ENCODE measurements at regions of chrX and their contacts with region 1.

Region 1: DNA sequence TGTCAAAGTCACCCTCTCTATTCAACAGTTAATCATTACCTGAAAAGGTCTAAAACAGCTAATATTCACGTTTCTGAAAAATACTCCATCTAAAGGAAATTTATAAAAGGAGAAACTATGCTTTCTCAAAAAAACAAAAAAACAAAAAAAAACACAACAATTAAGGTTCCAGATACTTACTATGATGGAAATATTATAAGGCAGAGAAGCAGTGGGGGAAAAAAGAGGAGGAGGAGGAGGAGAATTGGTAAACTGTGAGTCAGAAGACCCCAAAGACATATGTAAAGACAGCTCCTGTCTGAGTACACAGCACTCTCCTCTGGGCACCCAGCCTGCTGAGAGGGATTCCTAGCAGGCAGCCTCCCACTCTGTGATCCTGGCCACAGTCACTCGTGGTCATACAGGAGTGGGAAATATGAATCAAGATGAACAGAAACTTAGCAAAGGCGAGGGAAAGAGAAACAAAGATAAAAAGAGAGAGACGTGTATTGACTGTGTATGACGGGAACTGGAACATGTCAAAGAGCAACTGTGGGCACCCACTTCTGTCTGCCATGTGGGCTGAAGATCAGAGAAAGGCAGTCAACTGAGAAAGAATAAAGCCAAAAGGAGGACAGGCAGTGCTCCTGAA is 12.5 kb downstream of the KLHL15 start:
- DNase-seq: no peak
- H3K4me3 ChIP-seq: no peak overlapping the region
- H3K27ac ChIP-seq: no peak overlapping the region
- H3K4me1 ChIP-seq: no peaks in the 10 kb centered on the region
- H3K27me3 ChIP-seq: peaks cover 0 to 46% of the 10 kb centered on the region in 2 donors
- CTCF ChIP-seq: no peak
- POLR2A ChIP-seq: no peak

Region 2: DNA sequence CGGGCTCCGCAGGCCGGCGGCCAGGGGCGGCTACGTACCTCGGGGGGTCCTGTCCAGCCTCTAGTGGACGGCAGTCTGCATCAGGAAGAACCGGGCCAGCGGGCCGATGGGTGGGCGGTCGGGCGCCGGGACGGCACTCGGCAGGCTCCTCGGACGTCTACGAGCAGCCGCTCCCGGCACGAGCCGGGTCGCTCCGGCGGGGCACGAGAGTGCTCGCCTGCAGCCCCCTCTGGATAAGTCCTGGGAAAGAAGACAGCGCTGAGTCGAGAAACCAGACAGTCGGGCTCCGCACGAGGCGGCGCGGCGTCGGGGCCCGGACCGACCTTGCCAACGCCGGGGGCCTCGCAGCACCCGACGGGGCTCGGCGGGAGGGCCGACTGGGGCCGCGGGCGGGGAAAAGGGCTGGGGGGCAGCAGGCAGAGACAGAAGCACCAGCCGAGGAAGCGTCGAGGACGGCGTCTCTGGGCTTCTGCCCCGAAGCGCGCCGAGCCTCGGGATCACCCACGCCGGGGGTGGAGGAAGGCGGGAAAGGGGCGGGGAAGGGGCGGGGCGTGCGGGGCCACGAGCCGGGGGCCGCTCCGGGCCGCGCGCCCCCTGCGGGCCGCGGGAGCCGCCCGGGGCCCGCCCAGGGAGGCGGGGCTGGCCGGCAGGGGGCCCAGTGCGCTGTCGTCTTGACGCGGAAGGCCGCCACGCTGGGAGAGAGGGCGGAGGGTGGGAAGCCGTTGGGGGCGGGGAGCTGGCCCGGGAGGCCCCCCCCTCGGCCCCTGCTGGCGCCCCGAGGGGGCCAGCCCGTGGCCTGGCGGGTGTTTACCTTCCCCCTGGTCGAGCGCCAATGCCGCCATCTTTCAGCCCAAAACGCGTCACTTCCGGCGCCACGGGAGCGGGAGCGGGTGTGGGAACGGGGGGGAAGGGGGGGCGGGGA is 10.6 kb after region 1 on chrX:
- intact Hi-C with region 1: loop called (anchors 1 kb)
- DNase-seq: peak; percentile 74 to 81
- H3K4me3 ChIP-seq: peak overlapping the region; percentile 72 to 74 (median 74)
- H3K27ac ChIP-seq: peak overlapping the region; percentile 95 to 99
- H3K4me1 ChIP-seq: no peaks in the 10 kb centered on the region
- H3K27me3 ChIP-seq: peaks cover 0 to 34% of the 10 kb centered on the region in 2 donors
- CTCF ChIP-seq: no peak
- POLR2A ChIP-seq: peak; percentile 29

Region 3: GRCh38 chrX:24790166-24790565 is 775.7 kb after region 1 on chrX:
- intact Hi-C with region 1: no loop called
- DNase-seq: no peak
- H3K4me3 ChIP-seq: no peak overlapping the region
- H3K27ac ChIP-seq: no peak overlapping the region
- H3K4me1 ChIP-seq: no peaks in the 10 kb centered on the region
- H3K27me3 ChIP-seq: no peaks in the 10 kb centered on the region
- CTCF ChIP-seq: no peak
- POLR2A ChIP-seq: no peak

Measured in breast epithelium (tissue), 4 donors.